GM10248 (cell line): ENCODE measurements at regions of chr6 and their contacts with region 1.

Region 1: DNA sequence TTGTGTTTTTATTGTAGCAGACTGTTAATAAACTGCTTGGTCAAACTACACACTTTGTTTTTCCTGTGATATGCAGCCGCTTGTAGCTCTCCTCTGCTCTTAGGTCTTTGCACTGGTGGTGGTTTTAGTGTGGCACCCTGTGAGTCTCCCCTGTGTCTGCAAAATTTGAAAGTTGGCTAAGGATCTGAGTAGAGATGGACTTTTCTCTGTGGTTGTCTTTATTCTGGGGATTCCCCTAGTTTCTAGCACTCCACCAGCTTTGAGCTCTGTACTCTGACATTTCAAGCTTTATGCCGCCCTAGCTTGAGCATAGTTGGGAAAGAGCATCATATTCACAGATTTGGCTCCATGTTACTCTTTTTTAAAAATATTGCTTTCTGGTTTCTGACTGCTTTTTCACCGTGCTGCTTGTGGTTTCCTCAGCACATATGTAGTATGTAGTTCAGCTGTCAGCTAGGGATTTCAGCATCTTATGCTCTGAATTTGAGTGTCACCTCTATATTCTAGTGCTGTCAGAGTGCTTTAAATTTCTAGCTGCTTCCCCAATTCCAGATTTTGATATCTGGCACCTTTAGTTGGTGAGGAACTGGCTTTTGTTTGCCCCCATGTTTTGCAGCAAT is 25.4 kb downstream of the CDYL start:
- DNase-seq: peak; percentile 47
- CTCF ChIP-seq: no peak

Region 2: DNA sequence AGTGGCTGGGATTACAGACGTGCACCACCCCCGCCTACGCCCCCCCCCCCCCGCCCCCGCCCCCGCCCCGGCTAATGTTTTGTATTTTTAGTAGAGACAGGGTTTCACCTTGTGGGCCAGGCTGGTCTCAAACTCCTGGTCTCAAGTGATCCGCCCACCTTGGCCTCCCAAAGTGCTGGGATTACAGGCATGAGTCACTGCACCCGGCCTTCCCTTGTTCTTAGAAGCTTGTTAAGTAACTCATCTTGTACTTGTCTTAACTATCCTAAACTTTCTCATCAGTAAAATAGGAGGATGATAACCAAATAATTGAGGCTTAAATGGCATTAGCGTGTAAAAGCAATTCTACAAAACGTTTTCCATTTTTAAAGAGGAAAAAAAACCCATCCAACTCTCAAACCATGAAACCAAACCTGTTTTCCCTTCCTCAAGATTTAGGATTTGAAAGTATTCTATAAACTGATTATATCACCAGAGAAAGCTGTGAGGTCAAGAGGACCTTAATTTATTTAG is 21.2 kb before region 1 on chr6:
- CTCF ChIA-PET with region 1: interaction called, 11 read pairs
- POLR2A ChIA-PET with region 1: interaction called, 4 read pairs
- DNase-seq: no peak
- CTCF ChIP-seq: no peak

Region 3: DNA sequence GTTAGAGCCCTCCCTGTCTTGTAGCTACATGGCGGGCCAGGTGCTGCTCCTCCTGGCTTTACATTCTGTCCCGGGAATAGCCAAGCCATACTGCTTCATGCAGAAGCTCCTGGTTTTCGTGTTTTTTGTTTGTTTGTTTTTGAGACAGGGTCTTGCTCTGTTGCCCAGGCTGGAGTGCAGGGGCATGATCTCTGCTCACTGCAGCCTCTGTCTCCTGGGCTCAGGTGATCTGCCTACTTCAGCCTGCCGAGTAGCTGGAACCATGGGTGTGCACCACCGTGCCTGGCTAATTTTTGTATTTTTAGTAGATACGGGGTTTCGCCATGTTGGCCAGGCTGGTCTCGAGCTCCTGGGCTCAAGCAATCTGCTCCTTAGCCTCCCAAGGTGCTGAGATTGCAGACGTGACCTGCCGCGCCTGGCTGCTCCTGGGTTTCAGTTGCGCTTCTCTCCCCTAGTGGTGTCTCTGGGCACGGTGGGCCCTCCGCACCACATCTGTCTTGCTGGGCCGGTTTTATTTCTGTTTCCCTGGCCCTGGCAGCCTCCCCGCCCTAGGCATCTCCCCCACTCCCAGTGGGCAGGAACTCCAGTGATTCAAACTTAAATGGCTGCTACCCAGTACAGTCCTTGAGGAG is 12.5 kb before region 1 on chr6:
- CTCF ChIA-PET with region 1: interaction called, 27 read pairs
- POLR2A ChIA-PET with region 1: interaction called, 5 read pairs
- DNase-seq: peak; percentile 63
- CTCF ChIP-seq: no peak

Region 4: DNA sequence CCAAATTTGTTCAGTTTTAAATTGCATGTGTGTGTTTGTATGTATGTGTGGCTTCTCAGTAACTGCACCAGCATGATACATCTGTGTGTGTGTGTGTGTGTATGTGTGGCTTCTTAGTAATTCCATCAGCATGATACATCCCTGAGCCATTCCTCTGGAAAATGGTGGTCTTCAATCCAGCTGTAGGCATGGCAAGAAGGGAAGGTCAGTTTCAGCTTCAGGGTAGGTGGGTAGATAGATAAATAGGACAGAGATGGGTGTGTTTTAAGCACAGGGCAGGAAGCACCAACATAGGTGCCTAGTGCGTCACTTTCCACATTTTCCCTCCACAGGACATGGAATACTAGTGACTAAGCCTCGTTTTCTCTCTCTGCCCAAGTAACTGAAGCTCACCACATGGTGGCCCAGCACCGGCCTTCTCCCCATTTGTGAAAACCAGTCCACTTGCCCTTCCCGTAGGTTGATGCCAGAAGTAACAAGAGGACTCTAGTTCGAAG is 119.4 kb after region 1 on chr6:
- CTCF ChIA-PET with region 1: no interaction called
- POLR2A ChIA-PET with region 1: no interaction called
- DNase-seq: no peak
- CTCF ChIP-seq: no peak